Panc1 (cell line): ENCODE measurements at regions of chr1 and their contacts with region 1.

Region 1: DNA sequence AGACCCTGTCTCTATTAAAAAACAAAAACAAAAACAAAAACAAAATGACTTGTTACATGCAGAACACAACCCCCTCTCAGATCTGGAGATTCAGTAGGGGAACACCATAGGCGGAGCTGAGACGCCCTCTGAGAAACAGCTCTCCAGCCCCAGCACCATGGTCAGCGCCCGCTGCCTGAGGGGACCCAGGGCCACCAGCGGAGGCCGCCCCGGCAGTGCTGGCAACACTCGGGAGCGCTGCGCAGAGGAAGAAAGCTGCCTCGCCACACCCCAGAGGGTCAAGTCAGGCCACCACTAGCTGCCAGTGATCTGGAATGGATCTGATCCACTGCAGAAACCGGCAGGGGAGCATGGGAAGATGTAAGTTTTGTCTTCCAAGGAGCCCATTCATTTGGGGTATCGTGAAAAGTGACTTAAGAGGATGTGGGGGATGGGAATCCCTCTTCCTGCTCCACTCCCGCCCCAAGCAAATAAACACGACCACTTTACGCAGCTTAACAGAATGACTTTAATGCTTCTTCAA is 3.1 kb downstream of the ACTA1 start:
- DNase-seq: no peak
- ATAC-seq: no peak; the same call in 1 of the 2 replicates
- H3K4me3 ChIP-seq: no peak overlapping the region
- H3K27ac ChIP-seq: no peak overlapping the region
- H3K4me1 ChIP-seq: no peaks in the 10 kb centered on the region
- H3K27me3 ChIP-seq: no peaks in the 10 kb centered on the region; the same call in none of the 2 replicates
- CTCF ChIP-seq: no peak

Region 2: DNA sequence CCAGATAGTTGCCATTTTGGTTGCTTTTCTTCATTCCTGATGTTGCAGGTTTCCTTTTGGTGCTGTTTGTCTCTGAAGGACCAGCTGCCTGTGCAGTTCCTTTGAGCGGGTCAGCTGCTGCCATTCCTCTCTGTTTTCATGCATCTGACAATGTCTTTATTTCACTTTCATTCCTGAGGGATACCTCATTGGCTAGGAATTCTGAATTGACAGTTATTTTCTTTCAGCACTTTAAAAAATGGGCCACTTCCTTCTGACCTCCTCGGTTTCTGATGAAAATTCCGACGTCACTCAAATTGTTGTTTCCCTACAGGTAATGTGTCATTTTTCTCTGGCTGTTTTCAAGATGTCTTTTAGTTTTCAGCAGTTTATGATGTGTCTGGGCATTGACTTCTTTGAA is 112.8 kb before region 1 on chr1:
- CTCF ChIA-PET with region 1: interaction called, 11 read pairs
- POLR2A ChIA-PET with region 1: no interaction called
- in situ Hi-C with region 1: no loop called
- intact Hi-C with region 1: no loop called
- DNase-seq: no peak
- ATAC-seq: no peak
- H3K4me3 ChIP-seq: no peak overlapping the region
- H3K27ac ChIP-seq: no peak overlapping the region
- H3K4me1 ChIP-seq: no peaks in the 10 kb centered on the region
- H3K27me3 ChIP-seq: no peaks in the 10 kb centered on the region
- CTCF ChIP-seq: no peak

Region 3: GRCh38 chr1:229479660-229480399 is 49.0 kb after region 1 on chr1:
- CTCF ChIA-PET with region 1: no interaction called
- POLR2A ChIA-PET with region 1: no interaction called
- in situ Hi-C with region 1: no loop called
- intact Hi-C with region 1: no loop called
- DNase-seq: no peak
- ATAC-seq: peak; percentile 30; the same call in 1 of the 2 replicates
- H3K4me3 ChIP-seq: no peak overlapping the region
- H3K27ac ChIP-seq: no peak overlapping the region
- H3K4me1 ChIP-seq: no peaks in the 10 kb centered on the region
- H3K27me3 ChIP-seq: no peaks in the 10 kb centered on the region
- CTCF ChIP-seq: no peak